Spleen (tissue), 13 donors: ENCODE measurements at regions of chr2 and their contacts with region 1.

Region 1: GRCh38 chr2:71545572-71546274 is 92.4 kb downstream of the DYSF start:
- DNase-seq: peak; percentile 70
- H3K4me3 ChIP-seq: peak overlapping the region in 4 of 8 donors; percentile 10 to 58 (median 22)
- H3K27ac ChIP-seq: peak overlapping the region in 5 of 8 donors; percentile 56 to 80 (median 62)
- H3K4me1 ChIP-seq: peaks cover 0 to 23% (median 16%) of the 10 kb centered on the region in 6 donors
- H3K27me3 ChIP-seq: peaks cover 0 to 17% (median 0%) of the 10 kb centered on the region in 7 donors
- CTCF ChIP-seq: peak; percentile 23 to 76 (median 63)
- POLR2A ChIP-seq: no peak

Region 2: DNA sequence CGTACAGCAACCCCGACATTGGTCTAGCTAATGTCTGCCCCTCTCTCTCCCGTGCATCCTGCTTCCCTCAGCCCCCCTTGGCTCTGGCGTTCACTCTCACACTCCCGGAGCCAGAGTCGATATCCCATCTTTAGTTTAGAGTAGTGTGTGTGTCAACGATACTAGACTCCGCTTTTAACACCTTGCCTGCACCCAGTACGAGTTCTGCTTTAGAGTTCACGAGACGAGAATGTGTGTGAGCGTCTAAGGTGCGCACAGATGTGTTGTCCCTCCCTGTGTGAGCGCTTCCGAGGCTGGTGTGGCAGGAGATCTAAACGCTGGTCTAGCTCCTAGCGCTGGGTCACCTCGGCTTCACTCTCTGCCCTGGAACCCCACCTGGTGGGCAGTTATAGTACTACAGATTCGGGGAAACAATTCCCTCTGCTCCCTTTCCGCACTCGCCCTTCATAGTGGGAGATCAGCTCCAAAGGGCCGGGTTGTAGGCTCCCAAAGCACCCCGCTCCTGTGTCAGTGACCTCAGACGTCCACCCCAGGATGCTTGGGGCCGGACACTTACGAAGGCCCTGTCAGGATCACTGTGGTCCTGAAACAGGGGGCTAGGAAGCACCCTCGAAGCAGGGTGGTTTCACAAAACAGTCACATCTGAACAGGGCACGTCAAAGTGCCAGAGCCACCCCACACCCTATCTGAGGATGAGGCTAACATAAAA is 604.6 kb after region 1 on chr2:
- intact Hi-C with region 1: loop called (anchors 5 kb)
- DNase-seq: peak; percentile 87
- H3K4me3 ChIP-seq: peak overlapping the region in 7 of 8 donors; percentile 9 to 67 (median 42)
- H3K27ac ChIP-seq: no peak overlapping the region
- H3K4me1 ChIP-seq: peaks cover 28 to 51% (median 43%) of the 10 kb centered on the region in 6 donors
- H3K27me3 ChIP-seq: peaks cover 11 to 90% (median 50%) of the 10 kb centered on the region in 7 donors
- CTCF ChIP-seq: peak; percentile 63 to 88 (median 81)
- POLR2A ChIP-seq: no peak

Region 3: GRCh38 chr2:72579591-72580180 is 1034.0 kb after region 1 on chr2:
- intact Hi-C with region 1: loop called (anchors 10 kb)
- DNase-seq: no peak
- H3K4me3 ChIP-seq: no peak overlapping the region
- H3K27ac ChIP-seq: no peak overlapping the region
- H3K4me1 ChIP-seq: peaks cover 0 to 14% (median 5%) of the 10 kb centered on the region in 6 donors
- H3K27me3 ChIP-seq: no peaks in the 10 kb centered on the region
- CTCF ChIP-seq: peak in 9 of 11 experiments; percentile 20 to 69 (median 57)
- POLR2A ChIP-seq: no peak

Region 4: GRCh38 chr2:72745679-72746368 is 1200.1 kb after region 1 on chr2:
- intact Hi-C with region 1: loop called (anchors 10 kb)
- DNase-seq: no peak
- H3K4me3 ChIP-seq: no peak overlapping the region
- H3K27ac ChIP-seq: no peak overlapping the region
- H3K4me1 ChIP-seq: peaks cover 0 to 15% (median 6%) of the 10 kb centered on the region in 6 donors
- H3K27me3 ChIP-seq: no peaks in the 10 kb centered on the region
- CTCF ChIP-seq: peak in 9 of 11 experiments; percentile 16 to 63 (median 50)
- POLR2A ChIP-seq: no peak